Brain microvascular endothelial cell (primary cell): ENCODE measurements at regions of chr6 and their contacts with region 1.

Region 1: GRCh38 chr6:12011276-12012076 is 636 bp upstream of the HIVEP1 start:
- DNase-seq: peak; percentile 97
- H3K4me3 ChIP-seq: peak overlapping the region; percentile 63
- H3K27ac ChIP-seq: peak overlapping the region; percentile 93
- H3K27me3 ChIP-seq: no peaks in the 10 kb centered on the region
- CTCF ChIP-seq: no peak

Region 2: DNA sequence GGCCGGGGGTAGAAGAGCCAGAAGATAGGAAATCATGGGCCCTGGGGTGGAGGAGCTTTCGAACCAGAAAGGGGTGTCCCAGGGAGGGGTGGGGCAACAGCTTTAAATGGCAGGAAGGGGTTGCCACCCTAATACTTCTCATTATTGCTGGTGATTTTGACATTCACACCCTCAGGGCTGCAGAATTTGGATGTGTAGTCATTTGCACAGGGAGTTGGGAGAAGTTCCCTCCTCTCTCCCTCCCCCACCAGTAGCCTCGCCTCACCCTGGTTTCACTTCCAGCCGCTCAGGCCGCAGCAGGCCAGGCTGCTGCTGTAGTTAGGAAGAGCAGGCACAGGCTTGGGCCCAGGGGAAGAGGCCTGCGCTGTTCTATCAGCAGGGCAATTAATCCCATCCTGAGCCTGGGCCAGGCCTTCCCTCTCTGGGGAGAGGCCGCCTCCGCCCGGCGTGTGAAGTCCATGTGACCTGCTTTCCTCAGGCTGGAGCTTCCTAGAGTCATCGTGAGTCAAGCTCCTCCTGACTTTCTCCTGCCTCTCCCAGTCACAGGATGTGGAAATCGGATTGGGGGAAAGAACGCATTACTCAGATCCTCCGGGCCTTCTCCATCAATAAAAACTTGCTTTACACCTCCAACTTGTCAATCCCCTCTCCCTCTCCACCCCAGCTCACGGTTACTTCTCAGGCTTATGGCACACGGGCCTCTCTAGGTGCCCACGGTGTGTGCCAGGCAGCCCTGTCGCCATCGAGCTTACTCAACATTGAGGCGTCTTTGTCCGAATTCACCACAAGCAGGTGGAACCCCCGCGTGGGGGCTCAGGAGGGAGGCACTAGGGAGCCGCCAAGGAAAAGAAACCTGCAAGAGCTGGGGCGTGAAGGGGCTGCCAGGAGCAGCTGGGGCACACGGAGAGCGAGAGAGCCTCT is 240.7 kb before region 1 on chr6:
- in situ Hi-C with region 1: loop called (anchors 25 kb)
- DNase-seq: peak; percentile 98
- H3K4me3 ChIP-seq: no peak overlapping the region
- H3K27ac ChIP-seq: peak overlapping the region; percentile 98
- H3K27me3 ChIP-seq: no peaks in the 10 kb centered on the region
- CTCF ChIP-seq: no peak

Region 3: GRCh38 chr6:12075067-12075563 is 63.6 kb after region 1 on chr6:
- in situ Hi-C with region 1: no loop called
- DNase-seq: no peak
- H3K4me3 ChIP-seq: no peak overlapping the region
- H3K27ac ChIP-seq: no peak overlapping the region
- H3K27me3 ChIP-seq: no peaks in the 10 kb centered on the region
- CTCF ChIP-seq: peak; percentile 50